ENCODE measurements at regions of chr5 and their contacts with region 1.

Region 1: GRCh38 chr5:145946112-145946861 is 9.9 kb downstream of the SH3RF2 start:
- DNase-seq: peak; percentile 74
- H3K4me3 Mint-ChIP-seq: no peak overlapping the region
- H3K27ac Mint-ChIP-seq: peak overlapping the region; percentile 1
- H3K4me1 Mint-ChIP-seq: peaks cover 26% of the 10 kb centered on the region
- H3K27me3 Mint-ChIP-seq: peaks cover 29% of the 10 kb centered on the region

Region 2: DNA sequence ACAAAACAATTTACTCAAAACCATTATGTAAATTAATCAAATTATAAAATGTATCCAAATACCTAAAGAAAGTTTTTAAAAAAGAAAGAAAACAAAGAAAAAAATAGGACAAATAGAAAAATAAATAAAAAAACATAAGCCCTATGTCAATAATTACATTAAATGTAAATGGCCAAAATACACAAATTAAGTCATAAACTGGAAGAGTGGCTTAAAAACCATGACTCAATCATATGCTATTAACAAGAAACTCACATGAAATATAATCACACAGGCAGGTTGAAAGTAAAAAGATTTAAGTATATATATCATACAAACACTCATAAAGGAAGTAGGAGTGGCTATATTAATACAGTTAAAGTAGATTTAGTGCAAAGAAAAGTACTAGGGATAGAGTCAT is 206.4 kb before region 1 on chr5:
- intact Hi-C with region 1: loop called (anchors 10 kb)
- DNase-seq: no peak
- H3K4me3 Mint-ChIP-seq: no peak overlapping the region
- H3K27ac Mint-ChIP-seq: no peak overlapping the region
- H3K4me1 Mint-ChIP-seq: no peaks in the 10 kb centered on the region
- H3K27me3 Mint-ChIP-seq: no peaks in the 10 kb centered on the region

Region 3: GRCh38 chr5:145834917-145835847 is 111.1 kb before region 1 on chr5 and contains the start of gene PRELID2:
- intact Hi-C with region 1: loop called (anchors 5 kb)
- DNase-seq: peak; percentile 88
- H3K4me3 Mint-ChIP-seq: peak within 1 kb of the TSS; percentile 77
- H3K27ac Mint-ChIP-seq: no peak within 1 kb of the TSS
- H3K4me1 Mint-ChIP-seq: peaks cover 15% of the 10 kb centered on the region
- H3K27me3 Mint-ChIP-seq: peaks cover 18% of the 10 kb centered on the region
- total RNA-seq, gene PRELID2: 3.1 and 3.6 TPM in 2 replicates

Region 4: GRCh38 chr5:145981589-145982491 is 35.6 kb after region 1 on chr5:
- intact Hi-C with region 1: no loop called
- DNase-seq: no peak
- H3K4me3 Mint-ChIP-seq: no peak overlapping the region
- H3K27ac Mint-ChIP-seq: no peak overlapping the region
- H3K4me1 Mint-ChIP-seq: no peaks in the 10 kb centered on the region
- H3K27me3 Mint-ChIP-seq: peaks cover 2% of the 10 kb centered on the region

Region 5: GRCh38 chr5:146079695-146080361 is 133.5 kb after region 1 on chr5:
- intact Hi-C with region 1: loop called (anchors 5 kb)
- DNase-seq: peak; percentile 63
- H3K4me3 Mint-ChIP-seq: no peak overlapping the region
- H3K27ac Mint-ChIP-seq: no peak overlapping the region
- H3K4me1 Mint-ChIP-seq: peaks cover 18% of the 10 kb centered on the region
- H3K27me3 Mint-ChIP-seq: peaks cover 32% of the 10 kb centered on the region

Region 6: DNA sequence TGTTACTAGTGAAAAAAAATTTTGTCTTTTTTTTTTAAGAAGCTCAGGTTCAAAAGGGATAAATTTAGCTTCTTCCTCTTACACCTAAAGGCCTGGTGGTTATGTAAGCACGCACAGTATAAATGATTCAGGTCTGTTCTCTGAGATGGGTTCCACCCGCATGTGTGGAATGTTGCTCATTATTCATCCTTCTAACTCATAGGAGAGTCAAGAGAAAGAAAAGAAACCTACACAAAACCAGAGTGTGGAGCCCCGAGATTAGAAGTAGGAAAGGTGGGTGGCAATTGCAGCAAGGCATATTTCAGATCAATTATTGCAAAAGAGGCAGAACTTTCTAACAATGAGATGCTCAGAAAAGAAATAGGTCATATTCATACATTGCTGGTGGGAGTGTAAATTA is 145.6 kb after region 1 on chr5:
- intact Hi-C with region 1: no loop called
- DNase-seq: no peak
- H3K4me3 Mint-ChIP-seq: no peak overlapping the region
- H3K27ac Mint-ChIP-seq: no peak overlapping the region
- H3K4me1 Mint-ChIP-seq: no peaks in the 10 kb centered on the region
- H3K27me3 Mint-ChIP-seq: no peaks in the 10 kb centered on the region

Region 7: DNA sequence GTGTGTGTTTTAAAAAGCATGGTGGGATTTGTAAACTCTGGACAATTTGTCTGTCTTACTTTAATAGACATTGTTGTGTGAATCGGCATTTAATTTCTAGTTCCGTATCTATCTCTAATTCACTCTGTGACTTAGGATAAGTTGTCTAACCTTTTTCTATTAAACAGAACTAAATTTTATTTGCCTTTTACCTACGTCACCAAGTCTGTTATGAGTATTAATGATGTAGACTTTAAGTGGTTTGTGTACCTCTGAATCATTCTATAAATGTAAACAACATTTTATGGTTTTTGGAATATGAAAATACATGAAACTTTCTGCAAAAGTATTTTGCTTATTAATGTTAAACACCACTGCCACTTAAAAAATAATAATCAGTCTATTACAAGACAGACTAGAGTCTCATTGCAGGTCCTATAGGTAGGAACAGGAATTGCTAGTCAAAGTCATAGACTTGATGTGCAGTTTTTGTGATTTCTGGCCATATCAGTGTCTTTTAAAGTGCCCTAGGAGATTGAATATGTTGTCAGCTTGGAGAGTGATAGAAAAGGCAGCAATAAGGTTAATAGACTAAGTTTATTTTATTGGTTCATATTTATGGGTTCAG is 262.7 kb after region 1 on chr5:
- intact Hi-C with region 1: loop called (anchors 5 kb)
- DNase-seq: no peak
- H3K4me3 Mint-ChIP-seq: no peak overlapping the region
- H3K27ac Mint-ChIP-seq: no peak overlapping the region
- H3K4me1 Mint-ChIP-seq: peaks cover 20% of the 10 kb centered on the region
- H3K27me3 Mint-ChIP-seq: no peaks in the 10 kb centered on the region